ENCODE measurements at regions of chr7 and their contacts with region 1.

Region 1: GRCh38 chr7:37833107-37833817 is 15.1 kb upstream of the NME8 start:
- DNase-seq: peak; percentile 46
- CTCF ChIP-seq: peak; percentile 41

Region 2: DNA sequence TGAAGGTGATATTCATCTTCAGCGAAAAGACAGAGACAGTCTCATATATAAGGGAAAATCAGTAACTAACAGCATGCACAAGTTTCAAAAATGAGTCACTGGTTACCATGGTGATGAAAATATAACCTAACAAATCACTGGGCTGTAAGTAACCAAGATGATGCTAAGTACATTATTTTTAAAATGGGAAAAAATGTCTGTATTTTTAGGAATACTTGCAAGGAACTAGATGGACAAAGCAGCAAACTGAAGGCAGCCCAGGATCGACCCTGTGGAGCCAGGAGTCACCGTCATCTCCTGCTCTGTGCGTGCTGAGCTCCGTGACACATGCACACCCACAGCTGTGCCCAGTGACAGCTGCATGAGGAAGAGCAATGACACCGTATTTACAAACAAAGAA is 521.9 kb before region 1 on chr7:
- in situ Hi-C with region 1: no loop called
- DNase-seq: no peak
- CTCF ChIP-seq: no peak

Region 3: DNA sequence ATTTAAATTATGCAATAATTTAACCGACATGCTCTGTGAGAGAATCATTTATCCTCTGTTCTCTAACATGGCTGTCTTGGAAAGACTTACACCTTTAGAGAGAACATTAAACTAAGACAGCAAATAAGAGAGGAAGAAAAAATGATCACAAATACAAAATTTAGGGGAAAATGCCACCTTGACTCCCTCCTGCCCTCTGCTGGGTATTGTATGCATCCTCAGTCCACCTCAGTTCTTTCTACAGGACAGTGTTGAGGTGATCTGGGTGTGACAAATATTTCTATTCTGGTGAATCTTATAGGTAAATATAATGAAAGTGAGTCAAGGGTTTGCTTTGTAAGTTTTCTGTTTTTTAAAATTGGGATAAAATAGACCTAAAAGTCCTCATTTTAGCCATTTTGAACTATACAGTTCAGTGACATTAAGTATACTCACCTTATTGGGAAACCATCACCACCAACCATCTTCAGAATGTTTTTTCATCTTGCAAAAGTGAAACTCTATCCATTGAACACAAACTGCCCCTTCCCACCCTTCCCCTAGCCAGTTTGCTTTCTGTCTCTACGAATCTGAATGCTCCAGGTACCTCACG is 323.1 kb before region 1 on chr7:
- in situ Hi-C with region 1: loop called (anchors 25 kb)
- DNase-seq: peak; percentile 29
- CTCF ChIP-seq: peak; percentile 53

Region 4: DNA sequence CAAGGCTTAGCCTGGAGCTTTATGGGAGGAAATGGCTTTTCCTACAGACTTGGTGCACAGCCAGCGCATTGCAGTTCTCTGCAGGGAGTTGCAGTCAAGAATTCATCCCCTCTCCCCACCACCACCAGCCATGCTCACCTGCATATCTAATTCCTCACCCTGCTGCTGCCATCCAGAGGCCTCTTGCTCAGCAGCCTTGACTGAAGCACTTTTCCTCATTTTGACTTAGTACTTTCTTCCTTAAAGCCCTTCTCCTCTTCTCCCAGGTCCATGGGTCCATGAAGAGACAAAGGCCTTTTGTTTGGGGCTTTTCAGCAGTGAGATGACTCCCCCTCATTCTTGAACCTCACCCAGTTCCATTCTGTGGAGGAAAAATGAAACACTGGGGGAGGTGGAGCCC is 189.4 kb before region 1 on chr7:
- in situ Hi-C with region 1: loop called (anchors 25 kb)
- DNase-seq: no peak
- CTCF ChIP-seq: no peak

Region 5: DNA sequence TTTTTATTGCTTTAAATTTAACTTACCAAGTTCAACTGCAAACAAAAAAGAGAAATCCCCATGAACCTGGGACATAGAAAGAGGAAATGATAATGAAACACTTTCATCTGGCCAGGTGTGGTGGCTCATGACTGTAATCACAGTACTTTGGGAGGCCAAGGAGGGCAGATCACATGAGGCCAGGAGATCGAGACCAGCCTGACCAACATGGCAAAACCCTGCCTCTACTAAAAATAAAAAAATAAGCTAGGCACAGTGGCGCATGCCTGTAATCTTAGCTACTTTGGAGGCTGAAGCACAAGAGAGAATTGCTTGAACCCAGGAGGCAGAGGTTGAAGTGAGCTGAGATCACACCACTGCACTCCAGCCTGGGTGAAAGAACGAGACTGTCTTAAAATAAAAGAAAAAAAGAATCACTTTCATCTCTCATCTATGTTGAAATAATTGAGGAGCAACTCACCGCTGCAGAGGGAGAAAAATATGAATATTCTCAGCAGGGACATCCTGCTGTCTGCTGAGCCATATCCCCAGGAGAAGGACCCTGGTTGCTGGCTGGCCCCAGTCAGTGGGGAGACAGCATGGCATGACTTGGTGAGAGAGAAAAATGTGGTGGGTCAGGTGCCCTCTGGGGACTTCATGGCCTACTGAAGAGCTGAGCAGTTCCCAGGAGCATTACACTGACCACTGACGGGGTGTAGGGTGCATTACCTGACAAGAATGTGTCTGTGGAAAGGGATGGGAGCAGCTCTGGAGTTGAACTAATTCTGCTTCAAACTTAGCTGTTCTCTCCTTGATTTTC is 463.0 kb after region 1 on chr7:
- in situ Hi-C with region 1: no loop called
- DNase-seq: no peak
- CTCF ChIP-seq: no peak

Measured in GM13976 (cell line).